ENCODE measurements at regions of chr7 and their contacts with region 1.

Region 1: GRCh38 chr7:79176859-79177477 is 276.5 kb downstream of the MAGI2 start:
- DNase-seq: peak in 2 of 9 donors; percentile 0 to 4
- ATAC-seq: no peak
- H3K4me3 ChIP-seq: no peak overlapping the region
- H3K4me3 Mint-ChIP-seq: no peak overlapping the region
- H3K27ac ChIP-seq: no peak overlapping the region
- H3K27ac Mint-ChIP-seq: no peak overlapping the region
- H3K4me1 ChIP-seq: no peaks in the 10 kb centered on the region
- H3K4me1 Mint-ChIP-seq: no peaks in the 10 kb centered on the region
- H3K27me3 ChIP-seq: no peaks in the 10 kb centered on the region
- H3K27me3 Mint-ChIP-seq: peaks cover 0 to 4% (median 0%) of the 10 kb centered on the region in 5 donors

Region 2: GRCh38 chr7:77940647-77941046 is 1236.3 kb before region 1 on chr7:
- CTCF ChIA-PET with region 1: no interaction called
- POLR2A ChIA-PET with region 1: no interaction called
- intact Hi-C with region 1: loop called in 1 of 2 experiments (anchors 5 kb)
- DNase-seq: no peak
- ATAC-seq: no peak
- H3K4me3 ChIP-seq: no peak overlapping the region
- H3K4me3 Mint-ChIP-seq: no peak overlapping the region
- H3K27ac ChIP-seq: no peak overlapping the region
- H3K27ac Mint-ChIP-seq: no peak overlapping the region
- H3K4me1 ChIP-seq: no peaks in the 10 kb centered on the region
- H3K4me1 Mint-ChIP-seq: peaks cover 8 to 14% (median 9%) of the 10 kb centered on the region in 7 donors
- H3K27me3 ChIP-seq: no peaks in the 10 kb centered on the region
- H3K27me3 Mint-ChIP-seq: no peaks in the 10 kb centered on the region

Region 3: GRCh38 chr7:78020136-78020873 is 1156.7 kb before region 1 on chr7:
- CTCF ChIA-PET with region 1: no interaction called
- POLR2A ChIA-PET with region 1: no interaction called
- intact Hi-C with region 1: loop called in 1 of 2 experiments (anchors 2 kb)
- DNase-seq: peak in 5 of 9 donors; percentile 18 to 44 (median 25)
- ATAC-seq: peak; percentile 63
- H3K4me3 ChIP-seq: peak overlapping the region; percentile 31
- H3K4me3 Mint-ChIP-seq: peak overlapping the region; percentile 72 to 88 (median 83)
- H3K27ac ChIP-seq: no peak overlapping the region
- H3K27ac Mint-ChIP-seq: peak overlapping the region in 2 of 9 donors; percentile 28 to 56
- H3K4me1 ChIP-seq: peaks cover 0 to 7% of the 10 kb centered on the region in 2 donors
- H3K4me1 Mint-ChIP-seq: peaks cover 6 to 15% (median 11%) of the 10 kb centered on the region in 7 donors
- H3K27me3 ChIP-seq: peaks cover 0 to 13% of the 10 kb centered on the region in 2 donors
- H3K27me3 Mint-ChIP-seq: peaks cover 17 to 53% (median 39%) of the 10 kb centered on the region in 5 donors

Region 4: GRCh38 chr7:78510580-78511188 is 666.3 kb before region 1 on chr7:
- CTCF ChIA-PET with region 1: no interaction called
- POLR2A ChIA-PET with region 1: no interaction called
- intact Hi-C with region 1: loop called in 1 of 2 experiments (anchors 10 kb)
- DNase-seq: no peak
- ATAC-seq: no peak
- H3K4me3 ChIP-seq: no peak overlapping the region
- H3K4me3 Mint-ChIP-seq: no peak overlapping the region
- H3K27ac ChIP-seq: no peak overlapping the region
- H3K27ac Mint-ChIP-seq: no peak overlapping the region
- H3K4me1 ChIP-seq: no peaks in the 10 kb centered on the region
- H3K4me1 Mint-ChIP-seq: no peaks in the 10 kb centered on the region
- H3K27me3 ChIP-seq: no peaks in the 10 kb centered on the region
- H3K27me3 Mint-ChIP-seq: peaks cover 0 to 4% (median 0%) of the 10 kb centered on the region in 5 donors

Region 5: GRCh38 chr7:79157281-79157680 is 19.7 kb before region 1 on chr7:
- CTCF ChIA-PET with region 1: no interaction called
- POLR2A ChIA-PET with region 1: no interaction called
- intact Hi-C with region 1: no loop called
- DNase-seq: no peak
- ATAC-seq: no peak
- H3K4me3 ChIP-seq: no peak overlapping the region
- H3K4me3 Mint-ChIP-seq: no peak overlapping the region
- H3K27ac ChIP-seq: no peak overlapping the region
- H3K27ac Mint-ChIP-seq: no peak overlapping the region
- H3K4me1 ChIP-seq: no peaks in the 10 kb centered on the region
- H3K4me1 Mint-ChIP-seq: no peaks in the 10 kb centered on the region
- H3K27me3 ChIP-seq: no peaks in the 10 kb centered on the region
- H3K27me3 Mint-ChIP-seq: no peaks in the 10 kb centered on the region